ENCODE measurements at regions of chr14 and their contacts with region 1.

Region 1: DNA sequence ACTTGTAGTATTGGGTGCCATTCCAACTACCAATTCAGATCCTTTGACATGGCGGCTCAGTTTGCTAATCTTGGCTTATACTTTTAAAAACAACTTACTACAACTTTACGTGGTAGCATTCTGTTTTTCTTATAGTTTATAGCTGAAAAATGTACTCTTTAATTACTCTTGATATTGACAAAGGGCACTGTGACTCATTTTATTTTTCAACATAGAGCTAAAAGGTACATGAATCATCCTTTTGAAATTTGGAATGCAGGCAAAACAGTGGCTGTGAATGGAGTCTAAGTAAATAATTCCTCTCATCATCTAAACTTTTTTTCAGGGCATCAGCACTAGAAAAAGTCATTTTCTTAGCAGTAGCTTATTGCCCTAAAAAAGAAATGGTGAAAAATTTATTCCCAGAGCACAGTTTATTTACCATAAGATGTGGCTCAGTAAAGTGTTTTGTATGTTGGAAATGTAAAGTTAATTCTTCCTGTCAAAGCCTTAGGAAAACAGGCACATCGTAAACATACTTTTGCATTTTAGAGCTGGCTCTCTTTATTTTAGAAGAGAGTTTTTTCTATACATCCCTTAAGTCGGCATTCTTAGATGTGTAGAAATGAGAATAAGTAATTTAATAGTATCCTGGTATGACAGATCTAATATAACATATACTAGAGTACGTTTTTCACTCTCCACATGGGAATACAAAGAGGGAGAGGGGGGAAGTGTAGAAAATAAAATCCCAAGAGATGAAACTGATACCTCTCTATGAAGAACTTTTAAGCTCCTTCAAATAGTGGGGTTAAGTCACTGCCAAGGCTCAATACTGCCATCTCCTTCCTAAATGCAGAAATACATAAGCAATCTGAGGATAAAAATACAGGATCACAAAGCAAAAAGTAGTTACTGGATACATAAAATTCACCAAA is 55.2 kb downstream of the SLC25A21 start:
- DNase-seq: peak; percentile 68
- H3K4me3 ChIP-seq: no peak overlapping the region
- CTCF ChIP-seq: peak; percentile 69

Region 2: DNA sequence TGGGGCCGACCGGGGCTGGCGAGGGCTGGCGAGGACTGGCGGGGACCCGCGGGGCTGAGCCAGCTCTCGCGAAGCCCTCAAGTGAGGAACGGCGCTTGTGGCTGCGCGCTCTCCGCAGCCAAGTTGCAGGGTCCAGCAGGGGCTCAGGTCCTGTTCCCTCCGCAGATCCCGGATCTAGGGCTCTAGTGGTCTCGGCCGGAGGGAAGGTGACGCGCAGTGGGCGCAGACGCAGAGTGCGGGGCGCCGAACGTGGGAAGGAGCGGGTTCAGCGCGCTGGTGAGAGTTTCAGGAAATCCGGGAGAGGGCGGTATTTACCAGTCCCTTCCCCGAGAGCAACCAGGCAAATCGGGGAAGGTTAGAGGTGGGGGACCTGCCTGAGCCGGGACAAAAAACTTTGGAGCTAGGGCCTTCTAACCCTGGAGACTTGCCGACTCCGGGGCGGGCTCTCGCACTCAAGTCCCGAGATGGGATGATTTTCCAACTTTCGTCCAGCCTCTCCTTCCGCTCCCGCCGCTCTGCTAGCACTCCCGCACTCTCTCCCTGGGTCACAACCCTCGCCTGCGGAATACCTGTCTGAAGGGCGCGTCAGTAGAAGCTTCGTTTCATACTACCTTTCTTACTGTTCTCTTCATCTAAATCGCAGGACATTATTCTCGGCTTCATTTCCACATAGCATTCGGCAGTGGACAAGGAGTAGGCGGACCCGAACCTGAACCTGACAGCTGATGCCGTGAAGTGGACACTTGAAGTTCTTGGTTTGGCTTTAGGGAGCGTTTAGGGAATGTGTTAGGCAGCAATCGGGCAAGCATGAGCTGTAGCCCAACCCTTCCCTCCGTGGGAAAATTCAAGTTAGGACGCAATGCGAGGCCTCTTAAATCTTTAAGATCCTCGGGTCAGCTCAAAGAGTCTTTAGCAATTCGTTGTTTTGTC is 469.1 kb before region 1 on chr14:
- in situ Hi-C with region 1: loop called (anchors 25 kb)
- DNase-seq: no peak
- H3K4me3 ChIP-seq: peak overlapping the region; percentile 38
- CTCF ChIP-seq: peak; percentile 56

Region 3: GRCh38 chr14:37223947-37224474 is 106.8 kb after region 1 on chr14:
- in situ Hi-C with region 1: no loop called
- DNase-seq: no peak
- H3K4me3 ChIP-seq: no peak overlapping the region
- CTCF ChIP-seq: no peak